ENCODE measurements at regions of chr10 and their contacts with region 1.

Region 1: DNA sequence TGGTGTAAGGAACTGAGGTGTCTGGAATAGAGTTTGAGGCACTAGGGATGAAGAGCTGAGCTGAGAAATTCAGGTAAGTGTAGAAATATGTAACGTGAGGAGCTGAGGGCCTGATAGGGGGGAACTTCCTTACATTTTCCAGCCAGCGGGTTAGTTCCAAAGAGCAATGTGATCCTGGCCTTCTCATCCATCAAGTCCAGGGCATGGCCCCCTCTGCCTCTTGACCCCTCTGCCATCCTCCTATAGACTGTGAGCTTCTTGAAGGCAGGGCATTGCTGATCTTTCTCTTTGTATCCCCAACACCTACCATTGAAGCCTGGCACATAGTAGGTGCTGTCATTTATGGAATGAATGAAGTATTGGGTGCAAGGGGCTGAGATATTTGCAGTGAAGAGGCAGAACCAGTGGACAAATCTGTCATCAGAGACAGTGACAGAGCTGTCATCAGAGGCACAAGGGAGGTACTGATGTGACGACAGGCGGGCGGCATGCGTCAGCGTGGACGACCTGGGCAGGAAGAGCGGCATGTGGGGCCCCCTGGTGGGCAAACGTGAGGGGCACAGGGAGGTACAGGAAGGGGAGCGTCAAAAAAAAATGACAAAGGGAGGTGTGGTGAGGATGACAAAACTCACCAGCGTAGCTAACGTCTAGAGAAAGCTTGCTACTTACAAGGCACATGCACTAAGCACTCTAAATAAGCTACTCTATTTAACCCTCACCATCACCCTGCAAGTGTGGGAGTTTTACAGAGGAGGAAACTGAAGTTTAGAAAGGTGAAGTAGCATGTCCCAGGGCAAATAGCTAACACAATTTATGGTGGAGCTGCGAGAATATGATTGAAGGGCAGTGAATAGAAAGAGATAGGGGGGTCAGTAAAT is 5.2 kb upstream of the CAMK2G start:
- DNase-seq: peak; percentile 82
- H3K4me3 ChIP-seq: no peak overlapping the region
- H3K27ac ChIP-seq: no peak overlapping the region
- H3K4me1 ChIP-seq: peaks cover 6% of the 10 kb centered on the region
- H3K27me3 ChIP-seq: no peaks in the 10 kb centered on the region
- CTCF ChIP-seq: peak; percentile 93 to 98
- POLR2A ChIP-seq: no peak

Region 2: GRCh38 chr10:72800000-72800740 is 1079.4 kb before region 1 on chr10:
- CTCF ChIA-PET with region 1: no interaction called
- POLR2A ChIA-PET with region 1: no interaction called
- dilution Hi-C with region 1: no loop called
- intact Hi-C with region 1: no loop called
- DNase-seq: peak; percentile 94
- H3K4me3 ChIP-seq: no peak overlapping the region
- H3K27ac ChIP-seq: peak overlapping the region; percentile 30
- H3K4me1 ChIP-seq: peaks cover 34% of the 10 kb centered on the region
- H3K27me3 ChIP-seq: no peaks in the 10 kb centered on the region
- CTCF ChIP-seq: no peak
- POLR2A ChIP-seq: peak; percentile 28

Region 3: DNA sequence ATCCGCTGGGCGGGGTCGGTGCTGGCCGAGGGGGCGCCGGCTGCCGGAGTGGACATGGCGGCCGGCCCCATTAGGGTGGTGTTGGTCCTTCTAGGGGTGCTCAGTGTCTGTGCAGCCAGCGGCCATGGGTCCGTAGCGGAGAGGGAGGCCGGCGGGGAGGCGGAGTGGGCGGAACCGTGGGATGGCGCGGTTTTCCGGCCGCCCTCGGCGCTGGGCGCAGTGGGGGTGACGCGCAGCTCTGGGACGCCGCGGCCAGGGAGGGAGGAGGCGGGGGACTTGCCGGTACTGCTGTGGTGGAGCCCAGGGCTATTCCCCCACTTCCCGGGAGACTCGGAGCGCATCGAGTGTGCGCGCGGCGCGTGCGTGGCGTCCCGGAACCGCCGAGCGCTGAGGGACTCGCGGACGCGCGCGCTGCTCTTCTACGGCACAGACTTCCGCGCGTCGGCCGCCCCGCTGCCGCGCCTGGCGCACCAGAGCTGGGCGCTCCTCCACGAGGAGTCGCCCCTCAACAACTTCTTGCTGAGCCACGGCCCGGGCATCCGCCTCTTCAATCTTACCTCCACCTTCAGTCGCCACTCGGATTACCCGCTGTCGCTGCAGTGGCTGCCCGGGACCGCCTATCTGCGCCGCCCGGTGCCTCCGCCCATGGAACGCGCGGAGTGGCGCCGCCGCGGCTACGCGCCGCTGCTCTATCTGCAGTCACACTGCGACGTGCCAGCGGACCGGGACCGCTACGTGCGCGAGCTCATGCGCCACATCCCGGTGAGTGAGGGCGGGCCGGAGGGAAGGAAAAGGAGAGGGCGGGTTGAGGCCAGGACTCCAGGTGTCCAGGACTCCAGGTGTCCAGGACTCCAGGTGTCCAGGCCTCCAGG is 107.0 kb before region 1 on chr10:
- CTCF ChIA-PET with region 1: interaction called, 69 read pairs
- POLR2A ChIA-PET with region 1: no interaction called
- dilution Hi-C with region 1: no loop called
- intact Hi-C with region 1: loop called (anchors 1 kb)
- DNase-seq: peak; percentile 80
- H3K4me3 ChIP-seq: peak overlapping the region; percentile 40 to 85 (median 79)
- H3K27ac ChIP-seq: peak overlapping the region; percentile 72
- H3K4me1 ChIP-seq: peaks cover 20% of the 10 kb centered on the region
- H3K27me3 ChIP-seq: no peaks in the 10 kb centered on the region
- CTCF ChIP-seq: no peak
- POLR2A ChIP-seq: peak; percentile 89

Region 4: DNA sequence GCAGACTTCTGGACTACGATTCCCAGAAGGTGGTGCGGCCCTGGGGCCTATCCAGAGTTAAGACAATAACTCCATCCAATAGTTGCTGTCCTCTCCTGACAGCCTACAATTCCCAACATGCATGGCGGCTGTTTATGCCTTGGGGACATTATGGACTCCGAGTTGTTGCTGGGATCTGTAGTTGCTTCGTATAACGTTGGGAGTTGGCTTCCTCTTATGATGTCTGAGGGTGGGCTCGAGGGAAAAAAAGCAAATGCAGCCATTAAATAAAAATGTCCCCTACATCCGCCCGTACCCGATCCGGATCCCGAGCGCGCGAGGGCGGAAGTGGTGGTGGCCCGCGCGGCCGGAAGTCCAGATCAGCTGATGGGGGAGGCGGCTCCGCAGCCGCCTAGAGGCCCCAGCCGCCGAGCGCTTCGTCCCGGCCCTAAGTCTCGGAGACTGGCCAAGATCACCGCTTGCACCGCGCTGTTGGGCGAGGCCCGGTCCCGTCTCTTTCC is 94.3 kb before region 1 on chr10 and contains the start of gene ZSWIM8:
- CTCF ChIA-PET with region 1: interaction called, 11 read pairs
- POLR2A ChIA-PET with region 1: no interaction called
- dilution Hi-C with region 1: no loop called
- intact Hi-C with region 1: no loop called
- DNase-seq: peak; percentile 95
- H3K4me3 ChIP-seq: peak within 1 kb of the TSS; percentile 51 to 73 (median 68)
- H3K27ac ChIP-seq: peak within 1 kb of the TSS; percentile 46
- H3K4me1 ChIP-seq: peaks cover 33% of the 10 kb centered on the region
- H3K27me3 ChIP-seq: no peaks in the 10 kb centered on the region
- CTCF ChIP-seq: peak in 1 of 2 donors; percentile 25
- POLR2A ChIP-seq: peak; percentile 65
- total RNA-seq, gene ZSWIM8: 111 and 112 TPM in 2 replicates

Region 5: DNA sequence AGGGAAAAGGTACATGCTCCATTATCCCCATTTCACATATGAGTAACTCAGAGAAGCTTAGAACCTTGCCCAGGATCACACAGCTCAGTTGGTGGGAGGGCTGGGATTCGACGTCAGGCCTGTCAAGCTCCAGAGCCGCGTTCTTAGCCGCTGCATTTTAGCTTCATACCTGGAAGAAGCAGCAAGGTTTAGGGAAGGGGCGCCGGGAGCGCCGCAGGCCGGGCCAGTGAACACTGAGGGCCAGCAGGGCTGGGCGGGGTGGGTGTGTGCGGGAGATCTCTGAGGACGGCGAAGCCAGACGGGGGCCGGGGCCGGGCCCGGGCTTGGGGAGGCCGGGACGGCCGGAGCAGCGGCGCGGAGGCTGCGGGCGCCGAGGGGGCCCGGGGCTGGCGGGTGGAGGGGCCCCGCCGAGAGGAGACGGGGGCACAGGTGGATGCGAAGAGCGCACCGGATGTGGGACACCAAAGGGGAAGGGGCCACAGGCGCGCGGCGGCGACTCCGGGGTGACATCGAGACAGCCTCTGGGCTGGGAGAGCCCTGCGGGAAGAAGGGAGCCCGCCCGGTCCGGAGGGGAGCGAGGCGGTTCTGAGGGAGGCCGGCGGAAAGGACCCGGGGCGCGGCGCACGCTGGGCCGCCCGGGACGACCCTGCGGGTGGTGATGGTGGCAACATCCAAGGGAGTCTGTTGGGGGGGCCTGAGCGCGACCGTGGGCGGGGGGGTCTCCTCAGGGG is 68.6 kb before region 1 on chr10:
- CTCF ChIA-PET with region 1: interaction called, 10 read pairs
- POLR2A ChIA-PET with region 1: no interaction called
- dilution Hi-C with region 1: no loop called
- intact Hi-C with region 1: loop called (anchors 2 kb)
- DNase-seq: peak; percentile 28
- H3K4me3 ChIP-seq: peak overlapping the region; percentile 67 to 84 (median 73)
- H3K27ac ChIP-seq: peak overlapping the region; percentile 80
- H3K4me1 ChIP-seq: peaks cover 12% of the 10 kb centered on the region
- H3K27me3 ChIP-seq: no peaks in the 10 kb centered on the region
- CTCF ChIP-seq: no peak
- POLR2A ChIP-seq: no peak

Region 6: DNA sequence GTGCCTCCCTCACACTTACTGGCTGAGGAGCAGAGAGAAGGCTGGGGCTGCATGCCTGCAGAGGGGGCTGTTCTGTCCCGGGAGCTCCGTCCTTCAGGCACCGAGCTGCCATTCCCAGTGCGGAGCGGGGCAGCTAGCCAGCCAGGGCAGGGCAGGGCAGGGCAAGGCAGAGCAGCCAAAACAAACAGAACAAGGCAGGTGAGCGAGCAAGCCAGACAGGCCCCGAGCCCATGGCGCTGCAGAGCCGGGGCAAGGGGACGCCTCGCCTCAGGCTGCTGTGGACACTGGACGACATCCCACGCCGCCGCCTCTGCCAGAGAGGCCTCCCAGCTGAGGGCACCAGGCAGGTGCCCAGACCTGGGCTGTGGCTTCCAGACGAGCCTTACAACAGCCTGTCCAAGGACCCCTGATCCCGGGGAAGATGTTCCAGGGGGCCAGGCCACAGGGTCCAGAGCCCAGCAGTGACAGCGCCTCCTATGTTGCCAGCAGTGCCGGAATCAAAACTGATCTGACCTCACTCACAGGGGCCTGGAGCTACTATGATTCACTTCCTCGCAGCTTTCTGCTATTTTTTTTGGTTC is 59.9 kb before region 1 on chr10:
- CTCF ChIA-PET with region 1: interaction called, 26 read pairs
- POLR2A ChIA-PET with region 1: no interaction called
- dilution Hi-C with region 1: no loop called
- intact Hi-C with region 1: no loop called
- DNase-seq: peak; percentile 62
- H3K4me3 ChIP-seq: no peak overlapping the region
- H3K27ac ChIP-seq: peak overlapping the region; percentile 56
- H3K4me1 ChIP-seq: peaks cover 39% of the 10 kb centered on the region
- H3K27me3 ChIP-seq: no peaks in the 10 kb centered on the region
- CTCF ChIP-seq: peak; percentile 42 to 54
- POLR2A ChIP-seq: no peak

Region 7: DNA sequence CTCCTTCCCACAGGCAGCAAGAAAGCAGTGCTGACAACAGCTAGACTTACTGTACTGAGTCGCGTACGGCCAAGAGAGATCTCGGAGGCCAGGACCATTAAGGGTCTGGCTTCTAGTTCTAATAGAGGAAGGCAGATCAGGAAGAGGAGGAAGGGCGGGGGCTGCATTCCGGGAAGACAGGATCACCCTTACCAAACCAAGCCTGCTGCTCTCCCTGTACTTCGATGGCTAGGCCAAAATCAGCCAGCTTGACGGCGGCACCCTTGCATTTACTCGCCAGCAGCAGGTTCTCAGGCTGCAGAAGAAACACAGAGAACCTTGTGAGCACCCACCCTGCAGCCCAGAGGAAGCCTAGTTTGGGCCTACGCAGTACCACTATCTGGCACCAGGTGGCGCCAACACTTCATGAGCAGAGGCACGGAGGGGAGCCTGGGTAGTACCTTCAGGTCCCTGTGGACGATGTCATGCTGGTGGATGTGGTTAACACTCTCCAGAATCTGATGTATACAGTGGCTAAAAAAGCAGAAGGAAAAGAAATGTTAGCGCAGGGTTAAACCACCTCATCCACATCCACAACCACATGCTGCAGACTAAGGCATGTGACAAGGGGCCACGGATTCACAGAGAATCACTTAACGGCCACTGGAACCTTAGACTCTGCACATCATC is 30.6 kb before region 1 on chr10:
- CTCF ChIA-PET with region 1: interaction called, 171 read pairs
- POLR2A ChIA-PET with region 1: no interaction called
- dilution Hi-C with region 1: no loop called
- intact Hi-C with region 1: loop called (anchors 1 kb)
- DNase-seq: peak; percentile 76
- H3K4me3 ChIP-seq: no peak overlapping the region
- H3K27ac ChIP-seq: no peak overlapping the region
- H3K4me1 ChIP-seq: no peaks in the 10 kb centered on the region
- H3K27me3 ChIP-seq: no peaks in the 10 kb centered on the region
- CTCF ChIP-seq: peak; percentile 99
- POLR2A ChIP-seq: no peak

Region 8: GRCh38 chr10:73862011-73862410 is 17.5 kb before region 1 on chr10:
- CTCF ChIA-PET with region 1: interaction called, 10 read pairs
- POLR2A ChIA-PET with region 1: no interaction called
- dilution Hi-C with region 1: no loop called
- intact Hi-C with region 1: no loop called
- DNase-seq: no peak
- H3K4me3 ChIP-seq: no peak overlapping the region
- H3K27ac ChIP-seq: no peak overlapping the region
- H3K4me1 ChIP-seq: peaks cover 14% of the 10 kb centered on the region
- H3K27me3 ChIP-seq: no peaks in the 10 kb centered on the region
- CTCF ChIP-seq: no peak
- POLR2A ChIP-seq: no peak

Measured in endothelial cell of umbilical vein (primary cell).